Naive thymus-derived CD4-positive, alpha-beta T cell (primary cell): ENCODE measurements at regions of chr2 and their contacts with region 1.

Region 1: GRCh38 chr2:27217217-27218121 is at the start of gene CAD:
- DNase-seq: peak; percentile 71 to 90 (median 80)
- ATAC-seq: peak; percentile 87
- H3K4me3 ChIP-seq: peak within 1 kb of the TSS; percentile 68
- H3K4me3 Mint-ChIP-seq: peak within 1 kb of the TSS; percentile 90 to 98 (median 96)
- H3K27ac ChIP-seq: peak within 1 kb of the TSS; percentile 85
- H3K27ac Mint-ChIP-seq: peak within 1 kb of the TSS; percentile 86 to 96 (median 94)
- H3K4me1 ChIP-seq: peaks cover 19 to 24% of the 10 kb centered on the region in 2 donors
- H3K4me1 Mint-ChIP-seq: peaks cover 26 to 52% (median 45%) of the 10 kb centered on the region in 7 donors
- H3K27me3 ChIP-seq: no peaks in the 10 kb centered on the region
- H3K27me3 Mint-ChIP-seq: no peaks in the 10 kb centered on the region
- total RNA-seq, gene CAD: 34.4 to 65.7 (median 45.4) TPM

Region 2: DNA sequence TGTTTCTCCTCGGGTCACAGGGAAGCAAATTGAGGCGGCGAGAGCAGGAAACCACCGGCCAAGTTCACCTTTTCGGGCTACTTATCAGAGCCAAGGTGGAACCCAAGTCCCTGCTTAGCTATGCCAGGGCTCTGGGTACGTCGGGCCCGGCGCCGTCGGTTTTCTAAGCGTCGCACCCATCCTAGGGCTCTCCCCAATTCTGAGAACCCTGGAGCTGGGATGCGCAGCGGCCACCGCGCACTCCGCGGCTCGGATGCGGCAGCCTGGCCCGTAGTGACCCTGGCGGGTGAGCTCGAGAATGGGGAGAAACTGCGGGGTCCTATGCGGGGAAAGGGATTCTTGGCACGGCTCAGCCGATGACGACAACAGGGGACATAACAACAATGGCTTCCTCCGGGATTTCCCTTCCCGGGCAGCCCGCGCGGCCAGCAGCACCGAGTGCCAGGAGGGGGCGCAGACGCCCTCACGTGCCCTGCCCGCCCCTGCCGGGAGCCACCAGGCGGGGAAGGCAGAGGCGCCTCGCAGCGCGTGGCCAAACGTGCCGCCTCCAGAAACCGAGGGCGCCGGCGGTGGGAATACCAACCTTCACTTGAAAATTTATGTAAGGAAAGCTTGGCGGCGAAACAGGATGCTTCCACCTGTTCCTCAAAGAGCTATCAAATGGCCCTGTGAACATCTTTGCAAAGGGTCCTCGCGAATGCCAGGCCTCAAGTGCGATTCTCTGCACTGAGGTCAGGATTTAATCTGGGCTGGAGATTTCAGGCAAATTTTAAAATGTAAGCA is 47.5 kb after region 1 on chr2:
- CTCF ChIA-PET with region 1: no interaction called
- POLR2A ChIA-PET with region 1: interaction called, 3 read pairs
- intact Hi-C with region 1: loop called (anchors 2 kb)
- DNase-seq: peak in 8 of 9 donors; percentile 39 to 63 (median 46)
- ATAC-seq: peak; percentile 85
- H3K4me3 ChIP-seq: peak overlapping the region; percentile 59
- H3K4me3 Mint-ChIP-seq: peak overlapping the region in 9 of 10 donors; percentile 59 to 97 (median 85)
- H3K27ac ChIP-seq: no peak overlapping the region
- H3K27ac Mint-ChIP-seq: peak overlapping the region in 2 of 9 donors; percentile 2 to 38
- H3K4me1 ChIP-seq: peaks cover 8 to 23% of the 10 kb centered on the region in 2 donors
- H3K4me1 Mint-ChIP-seq: peaks cover 23 to 33% (median 29%) of the 10 kb centered on the region in 7 donors
- H3K27me3 ChIP-seq: peaks cover 6 to 18% of the 10 kb centered on the region in 2 donors
- H3K27me3 Mint-ChIP-seq: peaks cover 34 to 47% (median 40%) of the 10 kb centered on the region in 5 donors